RWPE1 (cell line): ENCODE measurements at regions of chr10 and their contacts with region 1.

Region 1: GRCh38 chr10:5810225-5810624 is 3.0 kb downstream of the GDI2 start:
- DNase-seq: no peak
- H3K27ac ChIP-seq: no peak overlapping the region
- CTCF ChIP-seq: no peak

Region 2: GRCh38 chr10:5666008-5666829 is 144.0 kb before region 1 on chr10 and contains the start of gene ASB13:
- CTCF ChIA-PET with region 1: no interaction called
- POLR2A ChIA-PET with region 1: no interaction called
- DNase-seq: peak; percentile 53
- H3K27ac ChIP-seq: peak within 1 kb of the TSS; percentile 72
- CTCF ChIP-seq: no peak

Region 3: GRCh38 chr10:5873515-5873995 is 63.3 kb after region 1 on chr10:
- CTCF ChIA-PET with region 1: interaction called, 10 read pairs
- POLR2A ChIA-PET with region 1: interaction called, 5 read pairs
- DNase-seq: peak; percentile 78
- H3K27ac ChIP-seq: 0 out of 2 replicates have a peak overlapping the region, but pooled peaks have one; percentile 7
- CTCF ChIP-seq: peak; percentile 77

Region 4: DNA sequence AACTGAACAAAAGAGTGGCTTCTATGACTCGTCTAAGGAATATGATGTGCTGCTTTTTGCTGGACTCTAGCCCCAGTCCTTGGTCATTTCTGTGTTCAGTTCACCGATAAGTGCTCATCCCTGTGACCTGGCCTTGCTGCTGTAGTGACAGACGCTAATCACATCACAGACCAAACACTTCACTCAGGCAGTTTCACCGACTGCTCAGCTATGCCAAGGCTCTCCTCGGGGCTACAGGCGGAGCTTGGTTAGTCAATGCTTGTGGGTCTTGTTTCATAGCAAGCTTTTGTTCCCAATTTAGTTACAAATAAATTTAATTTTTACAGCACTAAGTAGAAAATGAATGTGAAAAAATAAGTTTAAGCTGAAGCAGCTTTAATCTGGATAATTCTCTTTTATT is 960.6 kb after region 1 on chr10:
- CTCF ChIA-PET with region 1: no interaction called
- POLR2A ChIA-PET with region 1: no interaction called
- DNase-seq: no peak
- H3K27ac ChIP-seq: no peak overlapping the region
- CTCF ChIP-seq: no peak